Activated B cell treated with CpG ODN at 0.5 μM for 24 hours (primary cell): ENCODE measurements at regions of chr3 and their contacts with region 1.

Region 1: DNA sequence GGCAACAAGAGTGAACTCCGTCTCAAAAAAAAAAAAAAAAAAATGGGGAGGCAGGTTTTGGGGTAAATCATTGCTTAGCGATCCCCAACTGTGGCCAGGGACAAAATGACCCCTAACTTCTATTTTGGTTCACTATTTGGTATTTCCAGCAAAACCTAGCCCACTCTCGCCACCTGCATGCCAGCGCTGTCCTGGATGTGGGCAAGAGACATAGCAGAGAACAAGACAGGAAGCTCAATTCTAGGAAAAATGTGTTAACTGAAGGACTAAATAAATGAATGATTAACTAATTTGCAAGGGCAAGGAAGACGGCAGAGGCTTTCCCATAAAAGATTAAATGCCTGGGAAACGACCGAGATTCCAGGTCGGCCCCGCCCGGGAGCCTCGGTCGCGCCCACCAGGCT is 425 bp downstream of the NICN1 start:
- DNase-seq: no peak
- ATAC-seq: peak; percentile 1
- H3K4me3 Mint-ChIP-seq: peak overlapping the region; percentile 92
- H3K27ac Mint-ChIP-seq: peak overlapping the region; percentile 96
- H3K4me1 Mint-ChIP-seq: peaks cover 17% of the 10 kb centered on the region
- H3K27me3 Mint-ChIP-seq: no peaks in the 10 kb centered on the region
- CTCF ChIP-seq: no peak

Region 2: DNA sequence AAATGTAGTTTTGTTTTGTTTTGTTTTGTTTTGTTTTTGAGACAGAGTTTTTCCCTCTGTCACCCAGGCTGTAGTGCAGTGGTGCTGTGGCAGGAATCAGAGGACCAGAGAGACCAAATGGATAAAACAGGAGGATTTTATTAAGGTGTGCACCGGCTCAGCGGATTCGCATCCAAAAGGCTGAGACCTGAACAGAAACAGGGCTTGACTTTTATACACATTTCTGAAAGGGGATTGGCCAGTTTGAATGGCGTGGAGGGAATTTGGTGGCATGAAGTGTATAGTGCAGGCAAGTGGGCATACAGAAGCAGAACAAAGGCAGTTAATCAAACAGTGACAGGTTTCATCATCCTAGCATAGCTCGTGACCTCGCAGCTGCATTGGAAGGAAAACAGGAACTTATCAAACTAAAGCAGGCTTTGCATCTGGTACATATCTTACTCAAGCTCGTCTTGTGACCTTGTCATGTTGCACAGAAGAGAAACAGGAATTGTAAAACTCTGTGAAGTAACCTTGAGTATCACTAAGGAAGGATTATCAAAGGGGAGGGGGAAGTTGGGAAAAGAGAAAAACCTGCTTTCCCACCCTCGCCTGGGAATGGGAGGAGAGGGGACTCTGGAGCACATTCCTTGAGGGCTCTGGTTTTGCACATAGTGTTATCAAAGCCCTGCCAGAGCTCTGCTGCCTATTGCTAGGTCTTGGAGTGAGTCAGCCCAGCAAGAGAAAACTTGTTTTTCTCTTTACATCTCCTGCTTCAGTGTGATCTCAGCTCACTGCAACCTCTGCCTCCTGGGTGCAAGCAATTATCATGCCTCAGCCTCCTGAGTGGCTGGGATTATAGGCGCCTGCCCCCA is 190.2 kb before region 1 on chr3:
- CTCF ChIA-PET with region 1: no interaction called
- POLR2A ChIA-PET with region 1: no interaction called
- intact Hi-C with region 1: no loop called
- DNase-seq: no peak
- ATAC-seq: peak; percentile 82
- H3K4me3 Mint-ChIP-seq: peak overlapping the region; percentile 20
- H3K27ac Mint-ChIP-seq: peak overlapping the region; percentile 72
- H3K4me1 Mint-ChIP-seq: peaks cover 6% of the 10 kb centered on the region
- H3K27me3 Mint-ChIP-seq: no peaks in the 10 kb centered on the region
- CTCF ChIP-seq: no peak

Region 3: DNA sequence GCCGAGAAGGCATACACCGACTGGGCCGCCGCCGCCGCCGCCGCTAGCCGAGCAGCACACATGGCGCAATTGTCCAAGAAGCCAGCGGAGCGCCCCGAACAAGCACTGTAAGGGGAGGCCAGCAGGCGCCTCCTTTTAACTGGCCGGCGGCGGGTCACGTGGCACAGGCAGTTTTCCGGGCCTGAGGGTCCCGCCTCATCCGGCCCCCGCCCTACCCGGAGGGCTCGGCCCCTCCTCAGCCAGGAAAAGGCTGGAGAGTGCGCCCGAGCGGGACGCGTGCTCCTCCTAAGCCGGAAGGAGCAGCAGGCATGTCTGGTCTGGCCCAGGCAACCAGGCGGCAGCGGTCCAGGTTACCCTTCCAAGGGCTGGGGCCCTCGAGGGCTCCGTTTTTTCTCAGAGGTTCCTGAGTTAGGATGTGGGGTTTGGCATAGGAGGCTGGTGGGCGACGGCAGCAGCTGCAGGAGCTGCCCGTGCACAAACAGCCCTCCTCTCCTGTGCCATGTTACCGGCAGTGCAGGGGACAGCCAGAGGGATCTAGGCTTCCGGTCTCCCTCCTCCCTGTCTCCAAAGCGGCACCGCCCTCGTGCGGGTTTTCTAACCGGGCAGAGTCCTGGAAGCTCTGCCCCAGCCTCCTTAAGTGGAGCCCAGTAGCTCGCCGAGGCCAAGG is 70.3 kb before region 1 on chr3 and contains the start of gene GPX1:
- CTCF ChIA-PET with region 1: no interaction called
- POLR2A ChIA-PET with region 1: interaction called, 17 read pairs
- intact Hi-C with region 1: no loop called
- DNase-seq: peak; percentile 67
- ATAC-seq: peak; percentile 77
- H3K4me3 Mint-ChIP-seq: peak within 1 kb of the TSS; percentile 89
- H3K27ac Mint-ChIP-seq: peak within 1 kb of the TSS; percentile 90
- H3K4me1 Mint-ChIP-seq: peaks cover 35% of the 10 kb centered on the region
- H3K27me3 Mint-ChIP-seq: no peaks in the 10 kb centered on the region
- CTCF ChIP-seq: no peak
- total RNA-seq, gene GPX1: 90.0 and 94.6 TPM in 2 replicates

Region 4: GRCh38 chr3:49406571-49407566 is 21.8 kb before region 1 on chr3:
- CTCF ChIA-PET with region 1: no interaction called
- POLR2A ChIA-PET with region 1: interaction called, 42 read pairs
- intact Hi-C with region 1: loop called (anchors 1 kb)
- DNase-seq: no peak
- ATAC-seq: no peak
- H3K4me3 Mint-ChIP-seq: peak overlapping the region; percentile 50
- H3K27ac Mint-ChIP-seq: peak overlapping the region; percentile 63
- H3K4me1 Mint-ChIP-seq: peaks cover 66% of the 10 kb centered on the region
- H3K27me3 Mint-ChIP-seq: no peaks in the 10 kb centered on the region
- CTCF ChIP-seq: no peak

Region 5: DNA sequence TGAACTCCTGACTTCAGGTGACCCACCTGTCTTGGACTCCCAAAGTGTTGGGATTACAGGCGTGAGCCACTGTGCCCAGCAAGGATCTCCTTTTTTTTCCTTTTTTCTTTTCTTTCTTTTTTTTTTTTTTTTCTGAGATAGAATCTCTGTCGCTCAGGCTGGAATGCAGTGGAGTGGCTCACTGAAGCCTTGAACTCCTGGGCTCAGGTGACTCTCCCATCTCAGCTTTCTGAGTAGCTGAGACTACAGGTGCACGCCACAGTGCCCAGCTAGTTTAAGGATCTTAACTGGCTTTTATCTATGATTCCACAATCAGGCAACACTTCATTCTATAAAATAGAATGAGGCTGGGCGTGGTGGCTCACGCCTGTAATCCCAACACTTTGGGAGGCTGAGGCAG is 16.7 kb after region 1 on chr3:
- CTCF ChIA-PET with region 1: interaction called, 8 read pairs
- POLR2A ChIA-PET with region 1: interaction called, 29 read pairs
- intact Hi-C with region 1: loop called (anchors 1 kb)
- DNase-seq: no peak
- ATAC-seq: no peak
- H3K4me3 Mint-ChIP-seq: no peak overlapping the region
- H3K27ac Mint-ChIP-seq: peak overlapping the region; percentile 35
- H3K4me1 Mint-ChIP-seq: peaks cover 22% of the 10 kb centered on the region
- H3K27me3 Mint-ChIP-seq: no peaks in the 10 kb centered on the region
- CTCF ChIP-seq: no peak

Region 6: GRCh38 chr3:49469936-49470713 is 41.4 kb after region 1 on chr3 and contains the start of gene DAG1:
- CTCF ChIA-PET with region 1: no interaction called
- POLR2A ChIA-PET with region 1: interaction called, 7 read pairs
- intact Hi-C with region 1: loop called (anchors 1 kb)
- DNase-seq: peak; percentile 97
- ATAC-seq: peak; percentile 87
- H3K4me3 Mint-ChIP-seq: peak within 1 kb of the TSS; percentile 91
- H3K27ac Mint-ChIP-seq: peak within 1 kb of the TSS; percentile 96
- H3K4me1 Mint-ChIP-seq: peaks cover 26% of the 10 kb centered on the region
- H3K27me3 Mint-ChIP-seq: no peaks in the 10 kb centered on the region
- CTCF ChIP-seq: no peak
- total RNA-seq, gene DAG1: 18.5 and 19.7 TPM in 2 replicates

Region 7: GRCh38 chr3:49929331-49930240 is 500.9 kb after region 1 on chr3 and contains the start of gene MON1A:
- CTCF ChIA-PET with region 1: no interaction called
- POLR2A ChIA-PET with region 1: no interaction called
- intact Hi-C with region 1: loop called (anchors 5 kb)
- DNase-seq: peak; percentile 92
- ATAC-seq: peak; percentile 95
- H3K4me3 Mint-ChIP-seq: peak within 1 kb of the TSS; percentile 86
- H3K27ac Mint-ChIP-seq: peak within 1 kb of the TSS; percentile 79
- H3K4me1 Mint-ChIP-seq: peaks cover 16% of the 10 kb centered on the region
- H3K27me3 Mint-ChIP-seq: no peaks in the 10 kb centered on the region
- CTCF ChIP-seq: no peak
- total RNA-seq, gene MON1A: 6.3 and 7.1 TPM in 2 replicates